Activated B cell treated with CpG ODN at 0.5 μM for 24 hours (primary cell): ENCODE measurements at regions of chr6 and their contacts with region 1.

Region 1: DNA sequence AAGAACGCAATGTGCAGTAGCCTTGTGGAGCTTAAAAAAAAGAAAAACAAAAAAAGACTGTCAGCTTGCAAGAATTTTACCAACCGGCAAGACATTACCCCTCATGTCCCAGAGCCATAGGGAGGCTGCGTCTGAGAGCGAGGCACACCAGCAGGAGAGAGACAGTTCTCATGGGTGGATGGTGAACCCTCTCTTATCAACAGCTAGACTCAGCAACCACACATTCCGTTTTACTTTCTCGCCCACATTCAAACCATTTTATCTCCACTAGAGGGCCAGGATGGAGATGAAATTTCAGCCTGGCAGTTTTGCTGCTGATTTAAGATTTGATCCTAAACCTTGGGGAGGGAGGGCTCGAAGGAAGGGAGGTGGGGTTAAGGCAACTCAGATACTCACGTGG is 247.0 kb downstream of the ATXN1 start:
- DNase-seq: no peak
- ATAC-seq: peak; percentile 56
- H3K4me3 Mint-ChIP-seq: no peak overlapping the region
- H3K27ac Mint-ChIP-seq: peak overlapping the region; percentile 14
- H3K4me1 Mint-ChIP-seq: peaks cover 46% of the 10 kb centered on the region
- H3K27me3 Mint-ChIP-seq: no peaks in the 10 kb centered on the region
- CTCF ChIP-seq: no peak

Region 2: GRCh38 chr6:16420715-16421461 is 93.4 kb before region 1 on chr6:
- CTCF ChIA-PET with region 1: interaction called, 15 read pairs
- POLR2A ChIA-PET with region 1: interaction called, 13 read pairs
- intact Hi-C with region 1: no loop called
- DNase-seq: peak; percentile 27
- ATAC-seq: peak; percentile 66
- H3K4me3 Mint-ChIP-seq: peak overlapping the region; percentile 62
- H3K27ac Mint-ChIP-seq: peak overlapping the region; percentile 98
- H3K4me1 Mint-ChIP-seq: peaks cover 47% of the 10 kb centered on the region
- H3K27me3 Mint-ChIP-seq: no peaks in the 10 kb centered on the region
- CTCF ChIP-seq: no peak

Region 3: GRCh38 chr6:16494793-16495192 is 19.5 kb before region 1 on chr6:
- CTCF ChIA-PET with region 1: interaction called, 8 read pairs
- POLR2A ChIA-PET with region 1: interaction called, 10 read pairs
- intact Hi-C with region 1: loop called (anchors 2 kb)
- DNase-seq: no peak
- ATAC-seq: peak; percentile 89
- H3K4me3 Mint-ChIP-seq: peak overlapping the region; percentile 17
- H3K27ac Mint-ChIP-seq: peak overlapping the region; percentile 60
- H3K4me1 Mint-ChIP-seq: peaks cover 39% of the 10 kb centered on the region
- H3K27me3 Mint-ChIP-seq: no peaks in the 10 kb centered on the region
- CTCF ChIP-seq: no peak

Region 4: GRCh38 chr6:16576451-16577368 is 62.5 kb after region 1 on chr6:
- CTCF ChIA-PET with region 1: no interaction called
- POLR2A ChIA-PET with region 1: no interaction called
- intact Hi-C with region 1: no loop called
- DNase-seq: no peak
- ATAC-seq: peak; percentile 45
- H3K4me3 Mint-ChIP-seq: no peak overlapping the region
- H3K27ac Mint-ChIP-seq: no peak overlapping the region
- H3K4me1 Mint-ChIP-seq: peaks cover 6% of the 10 kb centered on the region
- H3K27me3 Mint-ChIP-seq: no peaks in the 10 kb centered on the region
- CTCF ChIP-seq: no peak

Region 5: DNA sequence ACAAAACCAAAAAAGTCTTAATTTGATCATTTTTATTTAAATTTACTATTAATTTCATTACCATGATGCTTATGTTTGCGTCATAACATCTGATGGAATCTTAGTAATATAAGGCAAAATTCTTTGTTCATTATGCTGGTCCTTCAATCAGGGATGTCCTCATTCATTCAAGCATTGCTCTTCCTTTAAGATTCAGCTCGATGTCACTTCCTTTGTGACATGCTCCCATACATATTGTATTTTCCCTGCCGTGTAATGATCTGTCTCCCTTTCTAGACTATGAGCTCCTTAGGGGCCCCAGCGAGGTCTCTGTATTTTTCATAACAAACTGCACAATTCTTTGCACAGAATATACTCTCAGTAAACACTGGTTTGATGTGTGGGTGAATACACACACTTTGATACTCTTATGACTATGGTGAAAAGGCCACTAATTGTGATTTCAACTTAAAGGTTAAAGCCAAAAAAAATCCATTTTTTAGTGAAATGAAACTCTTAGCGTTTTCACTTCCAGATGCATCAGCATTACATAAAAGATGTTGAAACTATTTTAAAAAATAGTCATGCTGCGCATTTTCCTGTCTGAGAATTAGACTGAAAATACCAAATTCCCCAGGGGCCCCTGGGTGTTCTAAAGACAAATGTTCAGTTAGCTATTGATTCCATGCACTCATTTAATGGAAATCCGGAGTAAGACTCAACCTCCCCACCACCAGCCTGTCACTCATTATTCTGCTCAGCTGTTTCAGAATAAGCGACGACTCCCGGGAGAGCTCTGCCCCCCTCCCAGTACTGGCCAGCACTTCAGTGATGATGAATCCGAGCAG is 77.4 kb after region 1 on chr6:
- CTCF ChIA-PET with region 1: interaction called, 4 read pairs
- POLR2A ChIA-PET with region 1: no interaction called
- intact Hi-C with region 1: loop called (anchors 2 kb)
- DNase-seq: no peak
- ATAC-seq: peak; percentile 75
- H3K4me3 Mint-ChIP-seq: peak overlapping the region; percentile 72
- H3K27ac Mint-ChIP-seq: peak overlapping the region; percentile 83
- H3K4me1 Mint-ChIP-seq: peaks cover 52% of the 10 kb centered on the region
- H3K27me3 Mint-ChIP-seq: no peaks in the 10 kb centered on the region
- CTCF ChIP-seq: no peak

Region 6: DNA sequence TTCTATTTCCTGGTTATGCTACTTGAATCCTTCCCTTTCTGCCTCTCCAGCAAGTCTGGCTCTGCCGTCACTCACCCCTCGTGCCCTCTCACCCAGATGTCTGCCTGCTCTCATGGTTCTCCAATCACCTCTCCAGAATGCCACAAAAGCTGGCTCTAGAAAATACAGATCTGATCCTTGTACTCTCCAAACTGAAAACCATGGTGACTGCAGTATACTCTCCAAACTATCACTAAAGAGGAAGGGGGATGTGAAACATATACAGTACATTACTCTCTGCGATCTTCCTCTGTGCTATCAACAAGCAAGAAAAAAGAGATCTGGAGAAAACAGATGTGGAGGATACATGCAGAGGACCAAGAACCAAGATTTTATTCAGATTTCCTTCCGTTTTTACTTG is 155.9 kb after region 1 on chr6:
- CTCF ChIA-PET with region 1: no interaction called
- POLR2A ChIA-PET with region 1: interaction called, 13 read pairs
- intact Hi-C with region 1: no loop called
- DNase-seq: no peak
- ATAC-seq: peak; percentile 49
- H3K4me3 Mint-ChIP-seq: no peak overlapping the region
- H3K27ac Mint-ChIP-seq: peak overlapping the region; percentile 61
- H3K4me1 Mint-ChIP-seq: peaks cover 26% of the 10 kb centered on the region
- H3K27me3 Mint-ChIP-seq: no peaks in the 10 kb centered on the region
- CTCF ChIP-seq: no peak

Region 7: GRCh38 chr6:16770701-16771569 is 256.7 kb after region 1 on chr6:
- CTCF ChIA-PET with region 1: interaction called, 57 read pairs
- POLR2A ChIA-PET with region 1: no interaction called
- intact Hi-C with region 1: loop called (anchors 1 kb)
- DNase-seq: peak; percentile 59
- ATAC-seq: peak; percentile 97
- H3K4me3 Mint-ChIP-seq: peak overlapping the region; percentile 32
- H3K27ac Mint-ChIP-seq: no peak overlapping the region
- H3K4me1 Mint-ChIP-seq: peaks cover 16% of the 10 kb centered on the region
- H3K27me3 Mint-ChIP-seq: peaks cover 3% of the 10 kb centered on the region
- CTCF ChIP-seq: peak; percentile 81